Left cardiac atrium (tissue), 4 donors: ENCODE measurements at regions of chr3 and their contacts with region 1.

Region 1: GRCh38 chr3:7166460-7166859 is 305.5 kb downstream of the GRM7 start:
- DNase-seq: peak; percentile 43
- ATAC-seq: peak; percentile 99

Region 2: DNA sequence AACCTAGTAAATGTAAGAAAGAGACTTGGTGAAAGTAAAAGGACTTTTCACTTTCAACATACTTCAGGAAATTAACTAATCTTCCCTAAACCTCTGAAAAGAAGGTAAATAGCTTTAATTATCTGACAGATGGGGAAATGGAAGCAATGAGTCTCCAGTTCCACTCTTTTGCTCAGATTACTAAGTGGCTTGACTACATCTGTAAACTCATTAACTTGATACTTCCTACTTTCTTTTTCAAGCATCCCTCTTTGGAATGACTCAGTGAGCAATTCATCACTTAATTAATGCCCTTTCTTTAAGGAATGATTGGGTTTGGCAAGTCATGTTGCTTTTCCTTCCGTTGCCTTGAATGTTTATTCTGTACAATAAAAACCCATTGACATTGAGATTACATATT is 71.3 kb before region 1 on chr3:
- intact Hi-C with region 1: no loop called
- DNase-seq: no peak
- ATAC-seq: no peak

Region 3: DNA sequence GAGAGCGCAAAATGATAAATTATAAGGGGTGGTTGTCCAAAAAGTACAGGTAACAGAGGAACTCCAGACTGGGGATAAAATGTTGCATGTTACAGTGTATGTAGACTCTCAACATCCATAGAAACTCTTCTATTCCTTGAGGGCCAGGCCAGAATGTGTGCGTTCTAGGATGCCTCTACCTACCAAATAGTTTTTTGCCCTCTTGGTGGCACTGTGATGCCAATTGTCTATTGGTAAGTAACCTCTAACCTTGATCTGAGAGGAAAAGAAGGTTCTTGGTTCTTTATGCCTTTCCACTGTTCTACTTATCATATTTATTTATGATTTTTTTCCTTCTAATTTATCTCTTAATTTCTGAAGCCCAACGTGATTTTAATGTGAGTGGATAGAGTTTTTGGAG is 119.0 kb after region 1 on chr3:
- intact Hi-C with region 1: loop called in 1 of 2 experiments (anchors 10 kb)
- DNase-seq: no peak
- ATAC-seq: peak in 1 of 2 donors; percentile 43

Region 4: GRCh38 chr3:7562892-7563291 is 396.4 kb after region 1 on chr3:
- intact Hi-C with region 1: no loop called
- DNase-seq: no peak
- ATAC-seq: no peak